ENCODE measurements at regions of chr3 and their contacts with region 1.

Region 1: DNA sequence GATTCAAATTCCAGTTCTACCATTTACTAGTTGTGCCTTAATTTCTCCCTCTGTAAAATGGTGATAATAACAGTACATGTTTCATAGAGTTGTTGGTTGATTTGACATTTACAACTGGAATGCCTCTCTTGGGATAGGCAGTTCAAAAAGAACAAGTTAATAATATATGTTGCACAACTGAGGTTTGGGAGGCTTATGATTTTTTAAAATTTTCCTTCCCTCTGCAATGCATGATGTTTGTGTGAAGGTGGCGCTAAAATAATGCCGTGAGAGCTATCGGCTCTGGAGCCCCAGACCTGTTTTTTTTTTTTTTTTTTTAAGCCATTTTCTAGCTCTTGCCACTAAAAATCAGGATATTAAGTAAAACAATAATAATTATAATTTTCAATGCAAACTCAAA is 18.6 kb downstream of the DNAJB11 start:
- DNase-seq: no peak
- H3K4me3 ChIP-seq: no peak overlapping the region
- H3K27ac ChIP-seq: no peak overlapping the region
- H3K4me1 ChIP-seq: no peaks in the 10 kb centered on the region
- H3K27me3 ChIP-seq: no peaks in the 10 kb centered on the region
- CTCF ChIP-seq: peak in 2 of 3 experiments; percentile 45 to 54; a peak in 3 of 4 replicates
- EP300 ChIP-seq: no peak
- POLR2A ChIP-seq: no peak
- RAD21 ChIP-seq: peak; percentile 78 to 82

Region 2: GRCh38 chr3:186754006-186754405 is 164.9 kb after region 1 on chr3:
- CTCF ChIA-PET with region 1: interaction called, 14 read pairs
- POLR2A ChIA-PET with region 1: no interaction called
- DNase-seq: no peak
- H3K4me3 ChIP-seq: no peak overlapping the region
- H3K27ac ChIP-seq: no peak overlapping the region
- H3K4me1 ChIP-seq: peaks cover 0 to 2% (median 0%) of the 10 kb centered on the region in 4 experiments; a peak in 3 of 7 replicates
- H3K27me3 ChIP-seq: no peaks in the 10 kb centered on the region
- CTCF ChIP-seq: no peak
- EP300 ChIP-seq: no peak
- POLR2A ChIP-seq: no peak
- RAD21 ChIP-seq: no peak